Panc1 (cell line): ENCODE measurements at regions of chr10 and their contacts with region 1.

Region 1: DNA sequence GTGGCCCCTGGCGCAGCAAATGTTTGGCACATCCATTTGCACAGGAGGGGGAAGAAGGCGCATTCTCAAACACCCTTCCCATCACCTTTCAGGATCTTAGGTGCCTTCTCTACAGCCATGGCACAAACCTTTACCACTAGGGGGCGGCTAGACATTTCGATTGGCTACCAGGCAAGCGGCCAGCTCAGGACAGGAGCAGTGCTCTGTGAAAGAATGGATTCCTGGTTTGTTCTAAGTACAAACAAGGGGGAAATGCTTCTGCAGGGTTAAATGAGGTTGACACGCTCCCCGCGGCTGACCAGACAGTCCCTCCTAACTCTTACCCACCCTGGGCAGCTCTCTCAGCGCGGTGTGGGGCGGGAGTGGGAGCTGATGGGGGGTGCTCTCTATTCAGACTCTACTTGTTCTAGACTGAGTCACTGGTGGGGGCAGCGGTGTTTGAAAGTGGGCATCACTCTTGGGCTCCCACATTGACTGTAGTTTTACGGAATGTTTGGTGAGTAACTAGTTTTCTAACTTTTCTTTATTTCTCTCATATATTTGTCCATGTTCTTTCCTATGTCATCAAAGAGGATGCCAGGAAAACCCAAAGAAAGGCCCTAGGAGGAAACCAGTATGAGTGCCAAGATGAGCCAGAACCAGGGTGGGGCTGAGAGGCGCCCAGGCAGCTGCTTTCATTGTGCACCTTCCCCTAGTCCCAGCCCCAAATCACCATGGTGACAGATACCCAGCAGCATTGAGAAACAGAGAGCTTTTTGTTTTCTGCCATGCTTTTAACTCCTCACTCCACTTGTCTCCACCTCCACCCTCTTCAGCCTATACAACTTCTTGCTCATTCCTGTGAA is 61.4 kb upstream of the GPR158 start:
- DNase-seq: peak; percentile 28
- ATAC-seq: peak; percentile 99
- H3K4me3 ChIP-seq: peak overlapping the region in 1 of 2 experiments; percentile 20; a peak in 1 of 4 replicates
- H3K27ac ChIP-seq: no peak overlapping the region
- H3K4me1 ChIP-seq: no peaks in the 10 kb centered on the region
- H3K27me3 ChIP-seq: no peaks in the 10 kb centered on the region
- CTCF ChIP-seq: peak; percentile 83

Region 2: GRCh38 chr10:24642622-24643417 is 470.6 kb before region 1 on chr10:
- CTCF ChIA-PET with region 1: no interaction called
- POLR2A ChIA-PET with region 1: interaction called, 10 read pairs
- in situ Hi-C with region 1: no loop called
- intact Hi-C with region 1: no loop called
- DNase-seq: peak; percentile 55
- ATAC-seq: peak; percentile 91
- H3K4me3 ChIP-seq: no peak overlapping the region
- H3K27ac ChIP-seq: no peak overlapping the region
- H3K4me1 ChIP-seq: peaks cover 13% of the 10 kb centered on the region
- H3K27me3 ChIP-seq: no peaks in the 10 kb centered on the region
- CTCF ChIP-seq: peak; percentile 68; the same call in 1 of the 2 replicates

Region 3: DNA sequence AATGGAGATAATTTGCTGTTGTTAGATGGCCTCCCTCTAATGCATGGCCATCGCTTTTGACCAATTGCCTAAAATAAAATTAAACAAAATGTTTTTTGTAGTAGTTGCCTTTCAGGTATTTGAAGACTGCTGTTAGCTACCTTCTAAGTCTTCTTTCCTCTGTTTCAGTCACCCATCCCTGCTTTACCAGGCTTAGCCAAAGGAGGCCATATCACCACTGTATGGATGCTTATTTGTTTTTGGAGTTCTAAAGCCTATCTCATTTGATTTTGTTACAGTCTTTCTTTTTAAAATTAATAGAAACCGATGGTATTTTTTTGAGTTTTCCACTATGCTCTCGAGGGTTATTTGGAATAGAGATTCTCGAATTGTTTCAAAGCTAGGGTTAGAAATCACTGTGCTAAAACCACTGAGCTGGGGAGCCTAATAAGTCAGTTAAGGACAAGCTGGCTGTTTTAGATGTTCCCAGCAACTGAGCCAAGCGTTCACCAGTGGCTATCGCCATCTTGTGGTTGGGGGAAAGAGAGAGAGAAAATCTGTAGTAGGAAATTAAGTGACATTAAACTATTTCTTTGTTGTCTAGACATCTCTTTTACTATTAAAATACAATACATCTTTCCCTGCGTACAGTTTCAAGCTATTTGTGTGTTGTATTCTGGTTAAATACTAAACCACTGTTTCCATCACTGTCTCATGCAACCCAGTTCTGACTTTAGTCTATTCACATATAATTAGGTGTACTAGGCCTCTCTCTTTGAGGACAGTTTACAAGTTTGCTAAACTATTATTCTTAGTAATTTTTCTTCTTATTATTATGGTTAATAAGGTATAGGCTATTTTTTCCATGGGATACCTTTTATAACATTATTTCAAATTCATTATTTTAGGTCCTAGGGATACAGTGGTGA is 113.6 kb after region 1 on chr10:
- CTCF ChIA-PET with region 1: interaction called, 3 read pairs
- POLR2A ChIA-PET with region 1: no interaction called
- in situ Hi-C with region 1: no loop called
- intact Hi-C with region 1: loop called (anchors 2 kb)
- DNase-seq: peak; percentile 7
- ATAC-seq: no peak; the same call in 1 of the 2 replicates
- H3K4me3 ChIP-seq: no peak overlapping the region
- H3K27ac ChIP-seq: no peak overlapping the region
- H3K4me1 ChIP-seq: no peaks in the 10 kb centered on the region
- H3K27me3 ChIP-seq: no peaks in the 10 kb centered on the region
- CTCF ChIP-seq: peak; percentile 77

Region 4: GRCh38 chr10:25701652-25702051 is 588.2 kb after region 1 on chr10:
- CTCF ChIA-PET with region 1: no interaction called
- POLR2A ChIA-PET with region 1: no interaction called
- in situ Hi-C with region 1: no loop called
- intact Hi-C with region 1: loop called (anchors 10 kb)
- DNase-seq: no peak
- ATAC-seq: no peak
- H3K4me3 ChIP-seq: no peak overlapping the region
- H3K27ac ChIP-seq: no peak overlapping the region
- H3K4me1 ChIP-seq: no peaks in the 10 kb centered on the region
- H3K27me3 ChIP-seq: no peaks in the 10 kb centered on the region
- CTCF ChIP-seq: no peak